ENCODE measurements at regions of chr6 and their contacts with region 1.

Region 1: GRCh38 chr6:137903933-137904821 is 37.1 kb downstream of the TNFAIP3 start:
- DNase-seq: peak; percentile 44
- H3K4me3 Mint-ChIP-seq: peak overlapping the region; percentile 61
- H3K27ac Mint-ChIP-seq: peak overlapping the region; percentile 97
- H3K4me1 Mint-ChIP-seq: peaks cover 62% of the 10 kb centered on the region
- H3K27me3 Mint-ChIP-seq: no peaks in the 10 kb centered on the region

Region 2: GRCh38 chr6:137767911-137768690 is 136.1 kb before region 1 on chr6:
- intact Hi-C with region 1: no loop called
- DNase-seq: no peak
- H3K4me3 Mint-ChIP-seq: peak overlapping the region; percentile 54
- H3K27ac Mint-ChIP-seq: peak overlapping the region; percentile 94
- H3K4me1 Mint-ChIP-seq: peaks cover 29% of the 10 kb centered on the region
- H3K27me3 Mint-ChIP-seq: no peaks in the 10 kb centered on the region

Region 3: DNA sequence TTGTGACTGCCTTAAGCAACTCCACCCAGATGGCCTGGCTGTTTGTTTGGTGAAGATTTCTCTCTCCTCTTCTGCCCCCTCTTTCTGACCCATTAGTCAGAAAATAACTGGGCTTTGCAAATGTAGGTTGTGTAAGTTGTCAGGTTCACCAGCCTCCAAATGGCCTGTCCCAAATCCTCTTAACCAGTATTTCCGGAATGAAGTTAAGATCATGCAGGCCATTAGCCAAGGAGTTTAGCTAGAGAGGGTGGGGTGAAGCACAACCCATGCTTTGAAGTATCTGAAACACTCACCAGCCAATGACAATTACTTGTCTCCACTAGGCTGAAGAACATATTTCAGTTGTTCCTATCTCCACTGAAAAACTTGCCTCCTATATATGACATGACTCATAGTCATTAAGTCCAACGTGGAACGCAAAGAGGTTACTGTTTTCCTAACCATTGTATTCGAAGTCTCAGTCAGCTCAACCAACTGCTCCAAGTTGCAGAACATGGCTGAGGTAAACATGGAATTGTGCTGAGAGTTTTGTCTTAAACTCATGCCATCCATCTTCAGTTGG is 74.6 kb before region 1 on chr6:
- intact Hi-C with region 1: loop called (anchors 1 kb)
- DNase-seq: no peak
- H3K4me3 Mint-ChIP-seq: no peak overlapping the region
- H3K27ac Mint-ChIP-seq: peak overlapping the region; percentile 98
- H3K4me1 Mint-ChIP-seq: peaks cover 66% of the 10 kb centered on the region
- H3K27me3 Mint-ChIP-seq: no peaks in the 10 kb centered on the region

Region 4: DNA sequence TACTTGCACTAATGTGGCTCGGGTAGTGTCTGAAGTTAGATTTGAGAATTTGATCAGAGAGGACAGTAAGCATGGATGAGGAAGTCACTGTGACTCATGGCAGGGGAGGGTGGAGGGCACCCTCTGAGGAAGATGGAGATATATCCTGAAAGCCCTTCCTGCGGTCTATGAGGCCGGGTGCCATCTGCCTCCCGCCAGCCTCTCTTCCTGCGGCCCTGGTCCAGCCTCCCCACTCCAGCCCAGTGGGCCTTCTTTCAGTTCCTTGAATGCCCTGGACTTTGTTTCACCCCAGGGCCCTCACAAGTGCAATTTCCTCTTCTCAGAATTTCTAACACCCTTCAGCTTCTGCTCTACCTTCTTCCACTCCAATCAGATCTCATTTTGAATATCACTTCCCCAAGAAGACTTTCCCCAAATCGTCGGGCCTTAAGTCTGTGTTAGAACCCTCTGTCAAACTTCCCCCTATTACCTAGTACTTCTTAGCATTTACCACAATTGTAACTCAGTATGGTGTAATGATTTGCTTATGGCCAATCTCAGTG is 57.3 kb before region 1 on chr6:
- intact Hi-C with region 1: loop called (anchors 1 kb)
- DNase-seq: no peak
- H3K4me3 Mint-ChIP-seq: no peak overlapping the region
- H3K27ac Mint-ChIP-seq: no peak overlapping the region
- H3K4me1 Mint-ChIP-seq: peaks cover 19% of the 10 kb centered on the region
- H3K27me3 Mint-ChIP-seq: no peaks in the 10 kb centered on the region

Region 5: DNA sequence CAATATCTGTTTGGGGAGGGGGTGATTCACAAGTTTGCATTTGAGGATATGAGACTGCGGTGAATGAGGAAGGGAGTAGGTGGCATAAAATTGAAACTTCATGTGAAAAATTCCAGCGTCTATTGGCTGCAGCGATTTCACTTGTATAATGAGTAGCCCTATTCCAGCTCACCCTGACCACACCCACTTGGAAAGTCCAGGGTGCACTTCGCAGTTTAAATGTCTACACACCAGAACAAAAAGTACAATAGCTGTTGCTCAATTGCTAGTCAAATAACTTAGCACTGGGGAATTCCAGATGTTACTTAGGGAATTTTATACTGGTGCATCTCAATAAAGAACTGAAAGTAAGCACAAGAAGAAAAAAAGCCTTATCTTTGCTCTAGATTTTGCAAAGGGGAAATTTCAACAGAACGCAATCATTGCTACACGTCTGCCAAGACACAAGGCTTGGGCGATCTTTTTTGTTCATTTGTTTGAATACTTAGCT is 30.9 kb before region 1 on chr6:
- intact Hi-C with region 1: loop called (anchors 1 kb)
- DNase-seq: peak; percentile 44
- H3K4me3 Mint-ChIP-seq: peak overlapping the region; percentile 96
- H3K27ac Mint-ChIP-seq: peak overlapping the region; percentile 96
- H3K4me1 Mint-ChIP-seq: peaks cover 52% of the 10 kb centered on the region
- H3K27me3 Mint-ChIP-seq: no peaks in the 10 kb centered on the region

Region 6: DNA sequence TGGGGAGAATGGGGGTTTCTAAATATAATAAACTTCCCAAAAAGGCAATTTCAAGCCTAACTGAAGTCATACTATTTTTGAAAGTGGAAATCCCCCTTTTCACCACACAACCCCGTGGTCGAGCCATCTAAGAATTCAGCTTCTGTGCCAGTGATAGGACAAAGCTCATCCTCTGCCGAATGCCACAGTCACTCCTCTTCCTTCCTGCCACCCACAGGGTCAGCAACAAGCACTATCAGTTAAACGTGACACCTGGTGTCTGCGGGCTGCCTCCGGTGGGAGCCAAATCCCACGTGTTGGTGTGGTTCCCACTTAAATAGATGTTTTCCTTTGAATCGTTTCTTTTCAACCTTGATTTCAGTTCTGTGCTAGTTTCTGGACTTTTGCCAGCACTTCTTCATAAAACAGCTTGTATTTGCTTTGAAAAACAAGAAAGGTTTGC is 23.6 kb after region 1 on chr6:
- intact Hi-C with region 1: loop called (anchors 1 kb)
- DNase-seq: peak; percentile 74
- H3K4me3 Mint-ChIP-seq: peak overlapping the region; percentile 59
- H3K27ac Mint-ChIP-seq: peak overlapping the region; percentile 97
- H3K4me1 Mint-ChIP-seq: peaks cover 70% of the 10 kb centered on the region
- H3K27me3 Mint-ChIP-seq: no peaks in the 10 kb centered on the region

Region 7: GRCh38 chr6:137975188-137975940 is 71.2 kb after region 1 on chr6:
- intact Hi-C with region 1: loop called (anchors 1 kb)
- DNase-seq: peak; percentile 26
- H3K4me3 Mint-ChIP-seq: peak overlapping the region; percentile 72
- H3K27ac Mint-ChIP-seq: peak overlapping the region; percentile 93
- H3K4me1 Mint-ChIP-seq: peaks cover 57% of the 10 kb centered on the region
- H3K27me3 Mint-ChIP-seq: no peaks in the 10 kb centered on the region

Region 8: GRCh38 chr6:138278326-138278725 is 374.1 kb after region 1 on chr6:
- intact Hi-C with region 1: no loop called
- DNase-seq: no peak
- H3K4me3 Mint-ChIP-seq: no peak overlapping the region
- H3K27ac Mint-ChIP-seq: no peak overlapping the region
- H3K4me1 Mint-ChIP-seq: no peaks in the 10 kb centered on the region
- H3K27me3 Mint-ChIP-seq: no peaks in the 10 kb centered on the region